Right ventricle myocardium superior (tissue), 1 donor: ENCODE measurements at regions of chr12 and their contacts with region 1.

Region 1: GRCh38 chr12:93127582-93128331 is 198.7 kb upstream of the EEA1 start:
- DNase-seq: peak; percentile 83
- ATAC-seq: peak; percentile 91

Region 2: DNA sequence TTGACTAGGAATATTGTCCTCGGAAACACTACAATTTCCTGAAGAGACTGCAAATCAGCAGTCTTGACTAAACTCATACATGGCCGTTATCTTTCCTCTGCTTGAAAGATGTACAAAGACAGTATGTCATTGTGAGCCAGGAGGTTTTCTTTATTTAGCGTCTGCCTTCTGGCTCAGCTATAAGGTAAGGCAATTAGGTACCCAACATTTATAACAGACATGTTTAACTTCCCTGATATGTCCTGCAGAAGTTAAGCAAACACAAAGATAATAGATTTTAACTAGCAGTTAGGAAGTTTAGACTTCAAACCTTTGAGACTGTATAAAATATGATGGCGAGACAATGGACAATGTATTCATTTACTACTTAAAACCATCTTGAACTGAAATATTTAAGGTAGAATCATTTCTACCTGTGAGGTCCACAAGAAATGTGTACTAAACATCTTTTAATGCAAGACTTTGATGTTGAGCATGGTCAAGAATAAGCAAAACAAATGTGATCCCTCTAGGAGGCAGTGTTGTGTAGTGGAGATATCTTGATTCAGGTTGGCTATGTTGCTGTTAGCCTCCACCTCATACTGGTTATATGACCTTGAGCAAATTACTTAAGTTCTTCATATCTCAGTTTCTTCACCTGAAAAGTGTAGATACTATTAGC is 102.5 kb before region 1 on chr12:
- intact Hi-C with region 1: loop called (anchors 10 kb)
- DNase-seq: no peak
- ATAC-seq: no peak

Region 3: DNA sequence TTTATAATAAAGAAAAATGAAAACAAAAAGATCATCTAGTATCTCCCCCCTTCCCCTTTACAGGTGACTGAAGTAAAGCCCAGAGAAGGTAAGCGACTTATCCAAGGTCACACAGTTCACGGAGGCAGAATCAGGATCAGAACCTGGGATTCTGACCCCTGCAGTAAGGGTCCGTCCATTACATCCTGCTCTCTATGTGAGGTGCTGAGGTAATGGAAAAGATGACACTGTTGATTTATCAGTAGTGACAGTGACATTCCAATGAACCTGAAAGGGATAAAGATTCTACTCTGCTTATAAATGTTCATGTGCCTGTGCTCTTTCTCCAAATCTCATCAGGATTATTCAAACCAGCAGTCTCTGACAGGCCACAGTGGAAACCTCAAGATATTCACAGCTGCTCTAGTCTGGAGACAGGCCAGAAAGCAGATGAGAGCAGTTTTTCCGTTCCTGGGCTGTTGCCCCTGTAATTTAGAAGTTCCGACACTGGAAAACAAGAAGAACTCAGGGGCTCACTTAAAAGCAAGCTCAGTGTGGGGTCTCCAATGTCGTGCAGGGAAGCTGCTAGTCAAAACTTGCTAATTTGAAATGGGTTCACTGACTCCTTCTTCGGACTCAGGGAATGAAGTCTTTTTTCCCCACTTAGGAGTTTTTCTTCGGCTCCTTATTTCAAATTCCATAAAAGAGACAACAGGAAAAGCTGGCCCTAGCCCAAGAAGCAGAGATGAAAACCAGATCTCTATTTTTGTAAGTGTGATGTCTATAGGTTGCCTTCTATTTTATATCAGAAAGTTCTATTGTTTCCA is 66.9 kb before region 1 on chr12:
- intact Hi-C with region 1: loop called (anchors 5 kb)
- DNase-seq: no peak
- ATAC-seq: peak; percentile 56

Region 4: DNA sequence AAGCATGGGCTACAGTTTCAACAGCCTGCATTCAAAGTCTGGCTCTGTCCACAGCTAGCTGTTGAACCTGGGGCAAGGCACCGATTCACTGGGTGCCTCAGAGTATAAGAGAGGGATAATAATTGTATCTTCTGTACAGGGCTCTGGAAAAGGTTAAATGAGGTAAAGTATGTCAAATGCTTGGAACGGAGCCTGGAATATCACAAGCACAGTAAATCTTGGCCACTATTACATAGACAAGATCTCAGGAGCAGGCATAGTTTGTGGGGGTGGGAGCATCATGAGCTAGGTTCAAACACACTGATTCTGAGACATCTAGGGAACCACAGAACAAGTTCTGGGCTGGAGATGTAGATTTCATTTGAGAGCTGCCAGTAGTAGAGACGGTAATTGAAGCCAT is 46.3 kb after region 1 on chr12:
- intact Hi-C with region 1: loop called (anchors 2 kb)
- DNase-seq: no peak
- ATAC-seq: peak; percentile 73